CD14-positive monocyte (primary cell): ENCODE measurements at regions of chr19 and their contacts with region 1.

Region 1: DNA sequence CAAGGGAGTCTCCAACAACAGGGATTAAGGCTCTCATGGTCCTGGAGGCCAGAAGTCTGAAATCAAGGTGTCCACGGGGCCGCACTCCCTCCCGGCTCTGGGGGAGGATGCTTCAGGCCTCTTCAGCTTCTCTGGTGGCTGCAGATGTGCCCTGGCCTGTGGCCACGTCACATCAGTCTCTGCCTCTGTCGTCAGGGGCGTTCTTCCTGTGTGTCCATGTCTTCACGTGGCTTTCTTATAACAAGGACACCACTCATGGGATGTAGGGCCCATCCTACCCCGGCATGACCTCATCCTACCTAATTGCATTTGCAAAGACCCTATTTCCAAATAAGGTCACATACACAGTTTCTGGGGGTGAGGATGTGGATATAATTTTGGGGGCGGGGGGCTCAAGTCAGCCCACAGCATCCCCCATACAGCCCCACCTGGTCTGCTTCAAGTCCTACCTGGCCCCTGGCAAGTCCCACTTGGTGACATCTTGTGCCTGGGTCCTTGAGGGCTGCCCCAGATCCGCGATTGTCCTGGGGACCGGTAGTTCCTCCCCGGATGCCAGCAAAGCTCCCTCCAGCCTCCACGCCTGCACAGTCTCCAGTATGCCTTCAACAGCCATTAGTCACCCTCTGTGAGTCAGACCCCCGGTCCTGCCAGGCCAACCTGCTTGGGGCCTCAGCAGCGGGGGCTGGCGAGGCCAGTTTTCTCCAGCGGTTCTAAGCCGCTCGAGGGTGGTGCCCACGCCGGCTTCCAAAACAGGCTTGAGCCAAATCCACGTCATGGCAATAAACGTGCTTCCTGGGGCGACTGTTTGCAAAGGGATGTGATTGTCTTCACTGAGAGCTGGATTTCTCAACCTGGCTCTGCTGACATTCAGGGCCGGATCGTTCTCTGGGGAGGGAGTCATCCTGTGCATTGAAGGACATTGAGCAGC is 32.2 kb downstream of the MYO9B start:
- DNase-seq: peak; percentile 95 to 98 (median 95)
- H3K4me3 ChIP-seq: peak overlapping the region in 1 of 3 experiments; percentile 51
- H3K4me3 Mint-ChIP-seq: peak overlapping the region; percentile 65 to 79
- H3K27ac ChIP-seq: peak overlapping the region; percentile 95
- H3K27ac Mint-ChIP-seq: peak overlapping the region; percentile 97 to 99 (median 99)
- H3K4me1 ChIP-seq: peaks cover 86 to 88% of the 10 kb centered on the region in 2 donors
- H3K4me1 Mint-ChIP-seq: peaks cover 89% of the 10 kb centered on the region
- H3K27me3 ChIP-seq: no peaks in the 10 kb centered on the region
- H3K27me3 Mint-ChIP-seq: peaks cover 0 to 4% (median 0%) of the 10 kb centered on the region in 3 donors
- CTCF ChIP-seq: no peak

Region 2: DNA sequence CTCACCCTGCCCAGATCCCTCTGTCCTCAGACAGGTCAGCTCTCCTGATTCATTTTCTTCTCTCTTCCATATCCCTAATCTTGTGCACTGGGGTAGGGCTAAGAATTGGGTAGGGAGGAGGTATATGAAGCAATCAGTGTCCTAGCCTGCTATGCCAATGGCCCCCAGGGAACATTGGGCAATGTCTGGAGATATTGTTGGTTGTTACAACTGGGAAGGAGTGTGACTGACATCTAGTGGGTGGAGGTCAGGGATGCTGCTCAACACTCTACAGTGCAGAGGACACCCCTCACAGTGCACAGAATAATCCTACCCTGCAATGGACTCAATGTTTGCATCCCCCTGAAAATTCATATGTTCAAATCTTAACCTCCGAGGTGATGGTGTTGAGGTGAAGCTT is 138.7 kb before region 1 on chr19:
- intact Hi-C with region 1: no loop called
- DNase-seq: peak; percentile 56 to 73 (median 73)
- H3K4me3 ChIP-seq: no peak overlapping the region
- H3K4me3 Mint-ChIP-seq: no peak overlapping the region
- H3K27ac ChIP-seq: no peak overlapping the region
- H3K27ac Mint-ChIP-seq: peak overlapping the region in 3 of 7 donors; percentile 16 to 43 (median 19)
- H3K4me1 ChIP-seq: peaks cover 5 to 8% of the 10 kb centered on the region in 2 donors
- H3K4me1 Mint-ChIP-seq: peaks cover 12% of the 10 kb centered on the region
- H3K27me3 ChIP-seq: no peaks in the 10 kb centered on the region
- H3K27me3 Mint-ChIP-seq: peaks cover 7 to 14% (median 10%) of the 10 kb centered on the region in 3 donors
- CTCF ChIP-seq: peak; percentile 61

Region 3: GRCh38 chr19:17090583-17090982 is 17.2 kb before region 1 on chr19:
- intact Hi-C with region 1: loop called in 1 of 2 experiments (anchors 1 kb)
- DNase-seq: peak; percentile 94 to 99 (median 96)
- H3K4me3 ChIP-seq: peak overlapping the region in 1 of 3 experiments; percentile 6
- H3K4me3 Mint-ChIP-seq: peak overlapping the region in 1 of 2 donors; percentile 77
- H3K27ac ChIP-seq: peak overlapping the region; percentile 96 to 100
- H3K27ac Mint-ChIP-seq: peak overlapping the region; percentile 96 to 100 (median 99)
- H3K4me1 ChIP-seq: peaks cover 60 to 74% of the 10 kb centered on the region in 2 donors
- H3K4me1 Mint-ChIP-seq: peaks cover 73% of the 10 kb centered on the region
- H3K27me3 ChIP-seq: no peaks in the 10 kb centered on the region
- H3K27me3 Mint-ChIP-seq: peaks cover 0 to 6% (median 2%) of the 10 kb centered on the region in 3 donors
- CTCF ChIP-seq: peak; percentile 24

Region 4: DNA sequence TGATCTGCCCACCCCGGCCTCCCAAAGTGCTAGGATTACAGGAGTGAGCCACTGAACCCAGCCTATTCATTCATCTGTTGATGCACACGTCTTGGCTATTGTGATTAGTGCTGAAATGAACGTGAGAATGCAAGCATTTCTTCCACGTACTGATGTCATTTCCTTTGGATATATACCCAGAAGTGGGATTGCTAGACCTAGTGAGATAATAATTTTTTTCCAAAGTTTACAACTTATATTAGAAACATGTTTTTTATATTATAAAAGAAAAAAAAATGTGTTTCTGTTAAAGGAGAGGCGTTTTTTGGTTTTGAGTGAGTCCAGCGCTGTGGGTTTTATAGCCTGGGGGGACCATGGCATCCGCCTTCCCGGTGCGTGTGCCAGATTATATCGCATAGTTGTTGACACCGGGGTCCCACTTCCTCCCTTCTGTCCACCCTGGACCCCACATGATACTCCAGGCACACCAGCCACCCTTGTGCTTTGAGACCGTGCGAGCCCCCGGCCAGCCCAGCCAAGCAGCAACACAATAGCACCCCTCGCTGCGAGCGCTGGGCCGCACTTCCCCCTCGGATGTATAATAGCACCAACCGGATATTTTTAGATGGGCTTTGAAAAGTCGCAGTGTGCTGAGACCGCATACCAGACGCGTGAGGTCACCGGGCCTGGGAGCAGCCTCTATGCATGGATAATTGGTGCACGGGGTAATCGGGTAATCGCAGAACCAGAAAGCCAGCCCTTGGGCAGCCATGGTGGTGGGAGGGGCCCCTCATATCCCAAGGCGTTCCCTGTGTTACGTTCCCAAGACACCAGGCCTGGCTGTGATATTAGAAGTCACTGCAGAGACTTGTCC is 27.4 kb after region 1 on chr19:
- intact Hi-C with region 1: loop called in 1 of 2 experiments (anchors 1 kb)
- DNase-seq: peak; percentile 63 to 69 (median 64)
- H3K4me3 ChIP-seq: peak overlapping the region in 1 of 3 experiments; percentile 20
- H3K4me3 Mint-ChIP-seq: peak overlapping the region; percentile 72 to 82
- H3K27ac ChIP-seq: peak overlapping the region; percentile 55 to 74
- H3K27ac Mint-ChIP-seq: peak overlapping the region; percentile 66 to 96 (median 90)
- H3K4me1 ChIP-seq: peaks cover 23 to 26% of the 10 kb centered on the region in 2 donors
- H3K4me1 Mint-ChIP-seq: peaks cover 47% of the 10 kb centered on the region
- H3K27me3 ChIP-seq: no peaks in the 10 kb centered on the region
- H3K27me3 Mint-ChIP-seq: peaks cover 0 to 1% (median 0%) of the 10 kb centered on the region in 3 donors
- CTCF ChIP-seq: no peak

Region 5: GRCh38 chr19:17170538-17171297 is 62.9 kb after region 1 on chr19:
- intact Hi-C with region 1: loop called in 1 of 2 experiments (anchors 5 kb)
- DNase-seq: peak in 1 of 3 donors; percentile 69
- H3K4me3 ChIP-seq: no peak overlapping the region
- H3K4me3 Mint-ChIP-seq: no peak overlapping the region
- H3K27ac ChIP-seq: peak overlapping the region in 1 of 2 donors; percentile 26
- H3K27ac Mint-ChIP-seq: peak overlapping the region in 6 of 7 donors; percentile 25 to 87 (median 66)
- H3K4me1 ChIP-seq: peaks cover 10 to 15% of the 10 kb centered on the region in 2 donors
- H3K4me1 Mint-ChIP-seq: peaks cover 9% of the 10 kb centered on the region
- H3K27me3 ChIP-seq: no peaks in the 10 kb centered on the region
- H3K27me3 Mint-ChIP-seq: peaks cover 0 to 2% (median 0%) of the 10 kb centered on the region in 3 donors
- CTCF ChIP-seq: no peak